Naive thymus-derived CD4-positive, alpha-beta T cell (primary cell): ENCODE measurements at regions of chr9 and their contacts with region 1.

Region 1: DNA sequence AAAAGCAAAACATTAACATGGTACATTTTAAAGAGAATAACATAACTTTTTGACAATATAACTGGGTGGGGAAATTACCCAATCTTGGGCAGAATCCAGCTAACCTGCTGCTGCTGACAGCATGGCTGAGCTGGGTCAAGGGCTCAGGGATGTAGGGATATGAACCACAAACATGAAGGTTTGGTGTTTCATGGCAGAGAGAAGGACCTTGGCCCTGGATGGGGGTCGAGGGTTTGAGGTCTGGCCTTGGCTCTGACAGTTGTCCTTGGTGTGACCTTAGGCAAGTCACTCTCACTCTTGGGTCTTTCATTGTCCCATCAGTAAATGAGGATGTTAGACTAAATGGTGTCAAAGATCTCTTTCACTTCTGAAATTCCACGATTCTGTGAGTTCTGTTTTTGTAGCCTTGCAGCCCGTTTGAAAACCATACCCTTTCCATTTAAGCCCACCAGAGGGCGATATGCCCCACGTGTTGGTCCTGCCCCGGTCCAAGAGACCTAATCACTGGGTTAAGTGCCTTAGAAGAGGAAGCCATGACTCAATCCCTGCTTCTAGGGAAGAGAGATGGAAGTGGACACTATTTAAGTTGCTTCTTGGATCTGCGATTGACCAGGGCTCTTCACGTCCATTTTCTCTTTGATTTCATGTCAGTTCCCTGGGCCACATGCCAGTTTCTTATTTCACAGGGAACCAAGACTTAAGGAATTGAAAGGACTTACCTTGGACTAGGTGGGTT is 56.8 kb upstream of the TEX48 start:
- DNase-seq: peak; percentile 41 to 81 (median 70)
- ATAC-seq: peak; percentile 97
- H3K4me3 ChIP-seq: no peak overlapping the region
- H3K4me3 Mint-ChIP-seq: peak overlapping the region in 4 of 10 donors; percentile 39 to 77 (median 52)
- H3K27ac ChIP-seq: no peak overlapping the region
- H3K27ac Mint-ChIP-seq: peak overlapping the region in 8 of 9 donors; percentile 26 to 88 (median 74)
- H3K4me1 ChIP-seq: peaks cover 30 to 34% of the 10 kb centered on the region in 2 donors
- H3K4me1 Mint-ChIP-seq: peaks cover 14 to 70% (median 33%) of the 10 kb centered on the region in 7 donors
- H3K27me3 ChIP-seq: no peaks in the 10 kb centered on the region
- H3K27me3 Mint-ChIP-seq: peaks cover 0 to 2% (median 0%) of the 10 kb centered on the region in 5 donors

Region 2: DNA sequence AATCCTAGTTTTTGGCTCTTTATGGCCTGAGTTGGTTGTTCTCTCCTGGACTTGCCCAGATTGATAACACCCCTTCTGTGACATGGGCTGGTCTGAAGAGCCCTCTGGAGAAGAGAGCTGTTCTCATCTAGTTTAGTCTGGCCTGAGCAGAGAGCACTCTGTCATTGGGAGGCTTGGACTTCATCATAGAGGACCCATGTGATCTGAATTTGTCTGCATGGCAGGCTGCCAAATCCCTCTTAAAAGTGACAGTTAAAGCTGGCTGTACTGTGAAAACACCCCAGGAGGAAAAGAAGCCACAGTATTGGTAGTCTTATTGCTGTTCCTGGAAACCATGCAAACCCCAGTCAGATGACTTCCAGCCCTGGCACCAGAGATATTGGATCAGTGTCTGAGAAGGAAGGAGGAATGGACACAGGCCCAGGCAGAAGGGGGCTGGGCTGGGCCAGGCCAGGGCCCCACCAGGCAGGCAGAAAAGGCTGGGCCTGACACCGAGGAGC is 1395.0 kb before region 1 on chr9:
- CTCF ChIA-PET with region 1: no interaction called
- POLR2A ChIA-PET with region 1: no interaction called
- intact Hi-C with region 1: no loop called
- DNase-seq: no peak
- ATAC-seq: no peak
- H3K4me3 ChIP-seq: no peak overlapping the region
- H3K4me3 Mint-ChIP-seq: no peak overlapping the region
- H3K27ac ChIP-seq: no peak overlapping the region
- H3K27ac Mint-ChIP-seq: peak overlapping the region in 1 of 9 donors; percentile 44
- H3K4me1 ChIP-seq: peaks cover 4 to 20% of the 10 kb centered on the region in 2 donors
- H3K4me1 Mint-ChIP-seq: peaks cover 12 to 58% (median 30%) of the 10 kb centered on the region in 7 donors
- H3K27me3 ChIP-seq: peaks cover 0 to 1% of the 10 kb centered on the region in 2 donors
- H3K27me3 Mint-ChIP-seq: peaks cover 0 to 7% (median 0%) of the 10 kb centered on the region in 5 donors

Region 3: GRCh38 chr9:114141553-114142402 is 597.0 kb before region 1 on chr9:
- CTCF ChIA-PET with region 1: no interaction called
- POLR2A ChIA-PET with region 1: no interaction called
- intact Hi-C with region 1: no loop called
- DNase-seq: no peak
- ATAC-seq: no peak
- H3K4me3 ChIP-seq: no peak overlapping the region
- H3K4me3 Mint-ChIP-seq: no peak overlapping the region
- H3K27ac ChIP-seq: no peak overlapping the region
- H3K27ac Mint-ChIP-seq: no peak overlapping the region
- H3K4me1 ChIP-seq: no peaks in the 10 kb centered on the region
- H3K4me1 Mint-ChIP-seq: no peaks in the 10 kb centered on the region
- H3K27me3 ChIP-seq: no peaks in the 10 kb centered on the region
- H3K27me3 Mint-ChIP-seq: peaks cover 9 to 25% (median 13%) of the 10 kb centered on the region in 5 donors

Region 4: DNA sequence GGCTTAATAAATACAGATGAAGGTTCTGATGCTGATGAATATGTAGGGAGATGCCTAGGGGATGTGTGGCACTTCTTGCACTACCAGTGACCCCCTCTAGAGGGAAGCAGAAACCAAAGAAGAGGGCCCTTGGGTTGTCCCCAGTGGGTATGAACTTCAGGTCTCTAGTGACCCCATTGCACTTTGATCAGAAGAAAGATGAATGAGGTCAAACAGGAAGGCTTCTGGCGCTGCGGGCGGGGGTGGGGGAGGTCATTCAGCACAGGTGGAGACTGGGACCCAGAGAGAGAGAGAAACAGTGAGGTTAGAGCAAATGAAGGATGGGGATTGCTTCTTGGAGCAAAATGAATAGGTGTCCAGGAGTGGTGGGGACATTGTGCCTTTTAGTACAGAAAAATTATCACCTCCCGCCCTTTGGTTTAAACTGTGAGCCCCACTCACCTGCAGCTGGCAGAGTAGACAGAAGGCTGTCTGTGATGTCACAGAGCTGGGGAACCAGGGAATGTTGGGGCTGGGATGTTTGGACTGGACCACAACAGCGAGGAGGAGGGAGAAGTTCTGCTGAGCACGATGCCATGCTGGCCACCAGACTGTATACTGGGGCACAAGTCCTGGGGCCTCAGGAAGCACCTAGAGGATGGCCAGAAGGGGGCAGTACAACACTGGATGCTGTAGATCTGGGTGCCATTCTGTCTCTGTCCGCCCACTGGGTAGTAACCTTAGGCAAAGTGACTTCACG is 57.0 kb before region 1 on chr9 and contains the start of gene TEX48:
- CTCF ChIA-PET with region 1: interaction called, 40 read pairs
- POLR2A ChIA-PET with region 1: no interaction called
- intact Hi-C with region 1: loop called (anchors 1 kb)
- DNase-seq: peak; percentile 29 to 74 (median 62)
- ATAC-seq: peak; percentile 95
- H3K4me3 ChIP-seq: no peak within 1 kb of the TSS
- H3K4me3 Mint-ChIP-seq: peak within 1 kb of the TSS in 1 of 10 donors; percentile 56
- H3K27ac ChIP-seq: no peak within 1 kb of the TSS
- H3K27ac Mint-ChIP-seq: peak within 1 kb of the TSS in 1 of 9 donors; percentile 95
- H3K4me1 ChIP-seq: peaks cover 5 to 11% of the 10 kb centered on the region in 2 donors
- H3K4me1 Mint-ChIP-seq: peaks cover 0 to 58% (median 7%) of the 10 kb centered on the region in 7 donors
- H3K27me3 ChIP-seq: peaks cover 0 to 4% of the 10 kb centered on the region in 2 donors
- H3K27me3 Mint-ChIP-seq: peaks cover 0 to 20% (median 14%) of the 10 kb centered on the region in 5 donors
- total RNA-seq, gene TEX48: 0.85 TPM in 1 of 5 experiments, not detected in the others

Region 5: DNA sequence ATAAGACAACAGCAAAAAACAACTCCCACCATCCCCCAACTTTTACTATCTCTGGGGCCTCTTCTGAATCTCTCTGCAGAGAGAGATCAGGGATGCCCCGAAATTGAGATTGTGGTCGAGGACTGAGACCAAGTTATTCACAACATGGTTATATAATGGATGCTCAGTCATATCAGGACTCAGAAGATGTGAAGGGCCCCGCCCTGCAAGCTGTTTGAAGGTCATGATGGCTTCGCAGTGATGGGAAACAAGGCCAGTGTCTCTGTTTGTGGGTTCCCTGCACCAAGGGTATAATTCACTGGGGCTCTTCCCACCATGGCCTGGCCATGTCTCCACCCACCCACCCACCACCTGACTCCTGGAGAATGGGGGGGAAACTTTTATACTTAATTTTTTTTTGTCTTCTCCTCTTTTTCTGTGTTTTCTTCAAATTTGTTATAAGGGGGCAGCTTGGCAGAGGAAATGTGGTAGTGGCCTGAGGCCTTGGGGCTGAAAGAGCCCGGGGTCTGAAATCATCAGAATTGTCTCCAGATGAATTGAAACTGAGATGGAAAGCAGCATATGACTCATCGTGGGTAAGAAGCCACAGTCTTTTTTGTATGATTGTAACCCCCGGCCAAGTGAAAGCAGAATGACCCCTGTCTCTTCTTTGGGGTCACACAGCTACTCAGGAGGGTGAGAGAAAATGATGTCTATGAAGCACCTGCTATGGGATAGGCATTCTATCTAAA is 41.8 kb before region 1 on chr9:
- CTCF ChIA-PET with region 1: interaction called, 5 read pairs
- POLR2A ChIA-PET with region 1: no interaction called
- intact Hi-C with region 1: loop called in 1 of 2 experiments (anchors 1 kb)
- DNase-seq: peak in 1 of 9 donors; percentile 67
- ATAC-seq: peak; percentile 37
- H3K4me3 ChIP-seq: no peak overlapping the region
- H3K4me3 Mint-ChIP-seq: peak overlapping the region in 1 of 10 donors; percentile 80
- H3K27ac ChIP-seq: no peak overlapping the region
- H3K27ac Mint-ChIP-seq: peak overlapping the region in 3 of 9 donors; percentile 27 to 99 (median 66)
- H3K4me1 ChIP-seq: peaks cover 0 to 17% of the 10 kb centered on the region in 2 donors
- H3K4me1 Mint-ChIP-seq: peaks cover 5 to 79% (median 9%) of the 10 kb centered on the region in 7 donors
- H3K27me3 ChIP-seq: no peaks in the 10 kb centered on the region
- H3K27me3 Mint-ChIP-seq: no peaks in the 10 kb centered on the region

Region 6: DNA sequence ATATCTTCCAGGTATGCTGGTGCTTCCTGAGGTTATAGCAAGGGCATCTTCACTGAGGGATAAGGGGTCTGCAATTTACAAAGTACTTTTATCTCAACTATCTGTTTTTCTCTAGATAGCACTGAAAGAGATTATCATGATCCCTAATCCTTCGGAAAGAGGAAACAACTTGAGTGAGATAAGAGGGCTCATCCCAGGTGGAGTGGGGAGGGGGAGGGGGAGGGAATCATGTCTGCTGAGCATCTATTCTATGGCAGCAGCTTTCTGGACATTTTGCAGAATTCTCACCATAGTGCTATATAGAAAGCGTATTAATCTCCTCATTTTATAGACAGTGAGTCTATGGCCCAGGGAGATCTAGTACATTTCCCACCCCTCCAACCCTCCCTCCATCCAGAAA is 61.2 kb after region 1 on chr9:
- CTCF ChIA-PET with region 1: no interaction called
- POLR2A ChIA-PET with region 1: no interaction called
- intact Hi-C with region 1: no loop called
- DNase-seq: no peak
- ATAC-seq: no peak
- H3K4me3 ChIP-seq: no peak overlapping the region
- H3K4me3 Mint-ChIP-seq: no peak overlapping the region
- H3K27ac ChIP-seq: no peak overlapping the region
- H3K27ac Mint-ChIP-seq: no peak overlapping the region
- H3K4me1 ChIP-seq: no peaks in the 10 kb centered on the region
- H3K4me1 Mint-ChIP-seq: peaks cover 0 to 22% (median 3%) of the 10 kb centered on the region in 7 donors
- H3K27me3 ChIP-seq: no peaks in the 10 kb centered on the region
- H3K27me3 Mint-ChIP-seq: peaks cover 0 to 18% (median 0%) of the 10 kb centered on the region in 5 donors

Region 7: DNA sequence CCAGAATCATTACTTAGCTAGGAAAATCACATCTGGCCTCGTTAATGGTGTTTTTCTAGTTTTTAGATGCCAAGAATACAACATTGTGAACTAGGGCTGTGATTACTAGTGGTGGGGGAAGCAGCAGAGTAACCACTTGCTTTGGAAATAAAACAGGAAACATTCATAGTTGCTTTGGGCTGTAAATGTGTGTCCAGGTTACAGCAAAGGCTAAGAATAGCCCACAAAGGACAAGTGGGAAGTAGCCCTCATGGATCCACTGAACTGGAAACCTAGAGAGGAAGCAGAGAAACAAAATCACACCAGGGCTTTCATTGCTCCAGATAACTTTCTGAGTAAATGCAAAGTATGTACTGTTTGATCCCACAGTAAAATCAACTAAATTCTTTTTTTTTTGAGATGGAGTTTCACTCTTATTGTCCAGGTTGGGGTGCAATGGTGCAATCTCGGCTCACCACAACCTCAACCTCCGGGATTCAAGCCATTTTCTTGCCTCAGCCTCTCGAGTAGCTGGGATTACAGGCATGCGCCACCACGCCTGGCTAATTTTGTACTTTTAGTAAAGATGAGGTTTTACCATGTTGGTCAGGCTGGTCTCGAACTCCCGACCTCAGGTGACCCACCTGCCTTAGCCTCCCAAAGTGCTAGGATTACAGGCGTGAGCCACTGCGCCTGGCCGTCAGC is 123.3 kb after region 1 on chr9:
- CTCF ChIA-PET with region 1: no interaction called
- POLR2A ChIA-PET with region 1: no interaction called
- intact Hi-C with region 1: no loop called
- DNase-seq: no peak
- ATAC-seq: no peak
- H3K4me3 ChIP-seq: no peak overlapping the region
- H3K4me3 Mint-ChIP-seq: no peak overlapping the region
- H3K27ac ChIP-seq: no peak overlapping the region
- H3K27ac Mint-ChIP-seq: peak overlapping the region in 1 of 9 donors; percentile 25
- H3K4me1 ChIP-seq: no peaks in the 10 kb centered on the region
- H3K4me1 Mint-ChIP-seq: peaks cover 0 to 16% (median 2%) of the 10 kb centered on the region in 7 donors
- H3K27me3 ChIP-seq: no peaks in the 10 kb centered on the region
- H3K27me3 Mint-ChIP-seq: peaks cover 0 to 30% (median 0%) of the 10 kb centered on the region in 5 donors

Region 8: DNA sequence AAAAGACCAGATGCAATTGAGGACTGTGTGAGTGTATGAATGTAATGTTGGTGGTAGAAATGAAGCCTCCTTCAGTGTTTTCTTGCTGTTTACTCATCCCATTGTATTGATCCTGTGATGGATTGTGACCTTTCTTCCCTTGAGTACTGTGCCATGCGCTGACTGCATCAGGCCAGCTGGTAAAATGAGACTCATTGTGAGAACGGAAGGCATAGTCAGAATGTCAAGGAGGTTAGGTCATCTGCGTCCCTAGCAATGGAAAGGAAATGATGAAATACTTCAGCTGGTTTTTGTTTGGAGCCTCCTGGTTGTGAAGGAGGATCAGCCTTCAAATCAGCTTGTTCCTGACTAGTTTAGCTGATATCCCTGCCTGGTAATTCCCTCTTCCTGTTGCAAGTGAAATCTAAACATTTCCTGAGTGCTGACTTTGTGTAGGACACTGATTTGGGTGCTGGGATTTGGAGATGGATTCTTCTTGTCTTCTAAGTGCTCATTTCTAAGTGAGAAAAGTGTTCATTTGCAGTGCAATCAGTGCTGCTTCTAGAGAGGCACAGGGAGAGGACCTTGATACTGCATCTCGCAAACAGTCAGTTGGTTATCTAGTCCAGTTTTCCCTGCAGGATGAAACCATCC is 156.2 kb after region 1 on chr9:
- CTCF ChIA-PET with region 1: interaction called, 9 read pairs
- POLR2A ChIA-PET with region 1: no interaction called
- intact Hi-C with region 1: loop called in 1 of 2 experiments (anchors 2 kb)
- DNase-seq: no peak
- ATAC-seq: peak; percentile 27
- H3K4me3 ChIP-seq: no peak overlapping the region
- H3K4me3 Mint-ChIP-seq: peak overlapping the region in 7 of 10 donors; percentile 11 to 73 (median 34)
- H3K27ac ChIP-seq: no peak overlapping the region
- H3K27ac Mint-ChIP-seq: peak overlapping the region in 7 of 9 donors; percentile 24 to 87 (median 48)
- H3K4me1 ChIP-seq: peaks cover 56 to 73% of the 10 kb centered on the region in 2 donors
- H3K4me1 Mint-ChIP-seq: peaks cover 17 to 54% (median 32%) of the 10 kb centered on the region in 7 donors
- H3K27me3 ChIP-seq: no peaks in the 10 kb centered on the region
- H3K27me3 Mint-ChIP-seq: no peaks in the 10 kb centered on the region

Region 9: GRCh38 chr9:115013998-115014397 is 275.2 kb after region 1 on chr9:
- CTCF ChIA-PET with region 1: interaction called, 44 read pairs
- POLR2A ChIA-PET with region 1: interaction called, 4 read pairs
- intact Hi-C with region 1: loop called (anchors 1 kb)
- DNase-seq: peak; percentile 57 to 84 (median 79)
- ATAC-seq: peak; percentile 88
- H3K4me3 ChIP-seq: no peak overlapping the region
- H3K4me3 Mint-ChIP-seq: peak overlapping the region in 1 of 10 donors; percentile 24
- H3K27ac ChIP-seq: no peak overlapping the region
- H3K27ac Mint-ChIP-seq: peak overlapping the region in 2 of 9 donors; percentile 12 to 79
- H3K4me1 ChIP-seq: peaks cover 0 to 4% of the 10 kb centered on the region in 2 donors
- H3K4me1 Mint-ChIP-seq: peaks cover 5 to 59% (median 12%) of the 10 kb centered on the region in 7 donors
- H3K27me3 ChIP-seq: no peaks in the 10 kb centered on the region
- H3K27me3 Mint-ChIP-seq: peaks cover 4 to 14% (median 7%) of the 10 kb centered on the region in 5 donors

Region 10: DNA sequence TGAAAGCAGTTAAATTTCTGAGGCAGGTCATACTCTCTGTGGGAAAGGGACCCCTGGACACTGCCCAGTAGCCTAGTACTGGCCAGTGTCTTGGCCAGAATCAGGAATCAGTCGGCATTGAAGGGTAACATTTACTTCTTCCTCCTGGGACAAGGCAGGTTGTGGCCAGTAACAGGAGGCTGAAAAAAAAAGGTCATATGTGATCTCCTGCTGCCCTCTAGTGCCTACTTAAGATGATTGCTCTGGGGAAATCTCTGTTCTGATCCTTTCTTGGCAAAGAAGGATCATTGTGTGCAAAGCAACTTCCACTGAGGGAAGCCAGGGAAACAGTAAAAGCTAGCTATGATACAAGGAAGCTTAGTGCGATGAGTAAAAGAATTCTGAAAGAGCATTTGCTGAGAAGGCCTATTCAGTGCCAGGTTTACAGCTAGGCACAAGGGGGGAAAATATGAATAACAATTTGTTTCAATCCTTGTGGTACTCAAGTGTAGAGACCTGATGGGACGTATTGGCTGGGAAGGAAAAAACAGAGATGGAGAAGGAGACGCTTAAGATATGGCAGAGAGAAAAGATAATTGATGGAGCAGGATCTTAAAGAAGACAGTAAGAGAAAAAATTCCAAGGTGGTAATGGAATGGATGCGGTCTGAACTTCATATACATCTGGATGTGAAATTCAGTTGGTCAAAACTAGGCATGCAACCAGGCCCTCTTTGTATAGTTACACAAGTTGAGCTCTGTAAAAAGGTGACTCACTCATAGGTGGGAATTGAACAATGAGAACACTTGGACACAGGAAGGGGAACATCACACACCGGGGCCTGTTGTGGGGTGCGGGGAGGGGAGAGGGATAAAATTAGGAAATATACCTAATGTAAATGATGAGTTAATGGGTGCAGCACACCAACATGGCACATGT is 1922.5 kb after region 1 on chr9:
- CTCF ChIA-PET with region 1: no interaction called
- POLR2A ChIA-PET with region 1: no interaction called
- intact Hi-C with region 1: loop called in 1 of 2 experiments (anchors 5 kb)
- DNase-seq: peak in 6 of 9 donors; percentile 3 to 39 (median 25)
- ATAC-seq: no peak
- H3K4me3 ChIP-seq: no peak overlapping the region
- H3K4me3 Mint-ChIP-seq: no peak overlapping the region
- H3K27ac ChIP-seq: no peak overlapping the region
- H3K27ac Mint-ChIP-seq: no peak overlapping the region
- H3K4me1 ChIP-seq: no peaks in the 10 kb centered on the region
- H3K4me1 Mint-ChIP-seq: no peaks in the 10 kb centered on the region
- H3K27me3 ChIP-seq: no peaks in the 10 kb centered on the region
- H3K27me3 Mint-ChIP-seq: no peaks in the 10 kb centered on the region